Activated CD4-positive, alpha-beta T cell treated with anti-CD3 and anti-CD28 coated beads for 36 hours (primary cell): ENCODE measurements at regions of chr2 and their contacts with region 1.

Region 1: DNA sequence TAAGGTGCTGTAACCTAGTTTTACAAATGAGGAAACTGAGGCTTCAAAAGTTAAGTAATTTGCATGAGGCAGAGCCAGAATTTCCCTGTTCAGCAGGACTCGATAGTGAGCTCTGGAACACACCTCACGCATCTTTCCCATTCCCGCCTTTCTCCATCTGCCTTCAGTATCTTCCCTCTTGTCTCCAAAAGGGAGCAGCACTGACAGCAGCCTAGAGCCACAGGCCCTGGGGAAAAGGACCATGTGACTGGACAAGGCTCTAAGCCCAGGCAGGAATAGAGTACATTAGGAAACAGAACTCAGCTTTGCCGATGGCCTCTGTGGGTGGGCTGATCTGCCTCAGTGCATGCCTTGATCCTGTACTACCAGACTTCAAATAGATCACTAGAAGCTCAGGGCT is 21.5 kb downstream of the GPR155 start:
- DNase-seq: no peak
- ATAC-seq: no peak
- H3K4me3 Mint-ChIP-seq: no peak overlapping the region
- H3K27ac Mint-ChIP-seq: no peak overlapping the region
- H3K4me1 Mint-ChIP-seq: no peaks in the 10 kb centered on the region
- H3K27me3 Mint-ChIP-seq: no peaks in the 10 kb centered on the region

Region 2: DNA sequence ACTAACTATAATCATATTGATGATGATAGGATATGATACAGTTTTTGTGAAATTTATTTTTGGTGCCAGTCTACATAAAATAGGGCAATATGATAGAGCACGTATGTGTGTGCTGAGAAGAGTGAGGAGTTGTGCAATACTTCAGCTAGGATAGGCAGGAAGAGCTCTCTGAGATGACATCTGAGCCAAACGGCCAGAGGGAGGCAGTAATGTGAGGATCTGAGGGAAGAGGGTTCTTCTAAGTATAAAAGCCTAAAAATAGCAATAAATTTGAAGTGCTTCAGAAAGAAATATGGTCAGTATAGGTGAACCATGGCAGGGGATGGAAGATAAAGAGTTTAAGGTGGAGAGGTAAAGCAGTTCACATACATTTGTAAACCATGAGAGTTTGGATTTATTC is 319.5 kb before region 1 on chr2:
- CTCF ChIA-PET with region 1: no interaction called
- POLR2A ChIA-PET with region 1: no interaction called
- intact Hi-C with region 1: no loop called
- DNase-seq: no peak
- ATAC-seq: no peak
- H3K4me3 Mint-ChIP-seq: no peak overlapping the region
- H3K27ac Mint-ChIP-seq: no peak overlapping the region
- H3K4me1 Mint-ChIP-seq: no peaks in the 10 kb centered on the region
- H3K27me3 Mint-ChIP-seq: no peaks in the 10 kb centered on the region

Region 3: DNA sequence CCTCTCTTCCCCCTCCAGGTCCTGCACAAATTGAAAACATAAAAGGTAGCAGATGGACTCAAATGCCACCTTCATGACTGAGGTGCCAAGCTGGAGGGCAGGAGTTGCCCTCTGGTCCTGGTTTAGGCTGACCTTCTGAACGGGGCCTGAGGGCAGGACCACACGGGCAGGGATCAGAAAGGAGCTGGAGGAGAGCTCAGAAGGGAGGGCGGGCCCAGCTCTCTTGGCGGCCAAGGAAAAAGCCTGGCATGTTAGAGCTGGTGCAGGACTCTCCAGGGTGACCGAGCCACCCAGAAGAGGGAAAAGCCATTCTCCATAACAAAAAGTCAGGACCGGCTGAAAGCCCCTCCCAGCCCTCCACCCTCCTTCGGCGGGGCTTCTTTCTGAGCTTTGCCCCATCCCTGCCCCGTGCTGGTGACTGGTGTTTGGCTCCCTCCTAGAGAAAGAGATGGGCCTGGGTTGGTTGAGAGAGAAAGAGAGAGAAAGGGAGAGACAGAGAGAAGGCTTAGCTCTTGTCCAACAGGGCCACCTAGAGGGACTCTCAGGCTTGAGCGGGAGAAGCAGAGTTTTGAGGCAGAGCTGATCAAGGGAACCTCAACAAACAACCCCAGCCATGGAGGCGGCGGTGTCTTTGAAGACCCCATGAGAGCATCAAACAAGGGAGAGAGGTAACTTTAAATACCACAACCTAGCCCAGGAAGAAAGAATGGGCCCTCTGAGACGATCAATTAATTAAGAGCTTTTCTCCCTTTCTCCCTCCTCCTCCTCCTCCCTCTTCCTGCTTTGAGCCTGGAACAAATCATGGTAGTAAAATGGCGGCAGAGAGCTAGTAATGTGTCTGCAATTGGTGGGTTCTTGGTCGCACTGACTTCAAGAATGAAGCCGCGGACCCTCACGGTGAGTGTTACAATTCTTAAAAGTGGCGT is 81.5 kb after region 1 on chr2:
- CTCF ChIA-PET with region 1: interaction called, 81 read pairs
- POLR2A ChIA-PET with region 1: no interaction called
- intact Hi-C with region 1: loop called (anchors 1 kb)
- DNase-seq: peak; percentile 67
- ATAC-seq: peak; percentile 79
- H3K4me3 Mint-ChIP-seq: no peak overlapping the region
- H3K27ac Mint-ChIP-seq: peak overlapping the region; percentile 15
- H3K4me1 Mint-ChIP-seq: peaks cover 7% of the 10 kb centered on the region
- H3K27me3 Mint-ChIP-seq: no peaks in the 10 kb centered on the region

Region 4: GRCh38 chr2:174561283-174561971 is 96.1 kb after region 1 on chr2:
- CTCF ChIA-PET with region 1: interaction called, 11 read pairs
- POLR2A ChIA-PET with region 1: no interaction called
- intact Hi-C with region 1: no loop called
- DNase-seq: no peak
- ATAC-seq: no peak
- H3K4me3 Mint-ChIP-seq: no peak overlapping the region
- H3K27ac Mint-ChIP-seq: no peak overlapping the region
- H3K4me1 Mint-ChIP-seq: peaks cover 14% of the 10 kb centered on the region
- H3K27me3 Mint-ChIP-seq: no peaks in the 10 kb centered on the region

Region 5: GRCh38 chr2:174603280-174603679 is 138.0 kb after region 1 on chr2:
- CTCF ChIA-PET with region 1: interaction called, 7 read pairs
- POLR2A ChIA-PET with region 1: interaction called, 3 read pairs
- intact Hi-C with region 1: loop called (anchors 1 kb)
- DNase-seq: peak; percentile 78
- ATAC-seq: peak; percentile 63
- H3K4me3 Mint-ChIP-seq: no peak overlapping the region
- H3K27ac Mint-ChIP-seq: peak overlapping the region; percentile 84
- H3K4me1 Mint-ChIP-seq: peaks cover 91% of the 10 kb centered on the region
- H3K27me3 Mint-ChIP-seq: no peaks in the 10 kb centered on the region

Region 6: GRCh38 chr2:174688079-174688478 is 222.8 kb after region 1 on chr2:
- CTCF ChIA-PET with region 1: interaction called, 58 read pairs
- POLR2A ChIA-PET with region 1: no interaction called
- intact Hi-C with region 1: loop called (anchors 1 to 2 kb)
- DNase-seq: no peak
- ATAC-seq: peak; percentile 70
- H3K4me3 Mint-ChIP-seq: no peak overlapping the region
- H3K27ac Mint-ChIP-seq: no peak overlapping the region
- H3K4me1 Mint-ChIP-seq: peaks cover 19% of the 10 kb centered on the region
- H3K27me3 Mint-ChIP-seq: no peaks in the 10 kb centered on the region